Panc1 (cell line): ENCODE measurements at regions of chr18 and their contacts with region 1.

Region 1: DNA sequence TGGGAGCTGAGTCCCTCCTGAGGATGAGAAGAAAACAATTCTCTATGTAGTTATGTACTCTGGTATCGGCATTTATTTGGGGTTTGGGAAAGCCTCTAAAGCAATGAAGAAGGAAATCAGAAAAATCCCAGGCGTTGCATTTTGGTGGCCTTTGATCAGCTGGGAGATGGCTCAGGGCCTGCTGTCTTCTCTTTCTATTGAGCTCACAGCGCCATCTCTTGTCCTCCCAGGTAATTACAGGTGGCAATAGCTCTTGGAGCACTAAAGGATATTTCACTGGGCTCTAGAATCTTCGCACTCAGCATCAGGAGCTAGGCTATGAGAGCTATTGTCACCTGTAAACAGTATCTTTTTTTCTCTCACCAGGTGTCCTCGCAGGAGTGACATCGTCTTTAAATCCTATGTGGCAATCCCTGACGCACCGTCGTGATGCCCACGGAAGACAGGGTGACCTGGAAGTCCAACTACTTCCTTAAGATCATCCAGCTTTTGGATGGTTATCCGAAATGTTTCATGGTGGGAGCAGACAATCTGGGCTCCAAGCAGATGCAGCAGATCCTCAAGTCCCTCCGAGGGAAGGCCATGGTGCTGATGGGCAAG is 76.1 kb upstream of the PMAIP1 start:
- DNase-seq: peak; percentile 38
- ATAC-seq: peak; percentile 71; the same call in 1 of the 2 replicates
- H3K4me3 ChIP-seq: no peak overlapping the region
- H3K27ac ChIP-seq: no peak overlapping the region
- H3K4me1 ChIP-seq: no peaks in the 10 kb centered on the region
- H3K27me3 ChIP-seq: no peaks in the 10 kb centered on the region
- CTCF ChIP-seq: peak; percentile 73

Region 2: GRCh38 chr18:59459369-59460079 is 364.2 kb before region 1 on chr18:
- CTCF ChIA-PET with region 1: interaction called, 26 read pairs
- POLR2A ChIA-PET with region 1: no interaction called
- in situ Hi-C with region 1: no loop called
- intact Hi-C with region 1: loop called (anchors 2 kb)
- DNase-seq: no peak
- ATAC-seq: no peak
- H3K4me3 ChIP-seq: no peak overlapping the region
- H3K27ac ChIP-seq: no peak overlapping the region
- H3K4me1 ChIP-seq: no peaks in the 10 kb centered on the region
- H3K27me3 ChIP-seq: no peaks in the 10 kb centered on the region
- CTCF ChIP-seq: peak; percentile 47; the same call in 1 of the 2 replicates

Region 3: GRCh38 chr18:59631583-59632181 is 192.0 kb before region 1 on chr18:
- CTCF ChIA-PET with region 1: interaction called, 10 read pairs
- POLR2A ChIA-PET with region 1: no interaction called
- in situ Hi-C with region 1: no loop called
- intact Hi-C with region 1: loop called (anchors 5 kb)
- DNase-seq: peak; percentile 12
- ATAC-seq: no peak
- H3K4me3 ChIP-seq: no peak overlapping the region
- H3K27ac ChIP-seq: no peak overlapping the region
- H3K4me1 ChIP-seq: no peaks in the 10 kb centered on the region
- H3K27me3 ChIP-seq: no peaks in the 10 kb centered on the region
- CTCF ChIP-seq: peak; percentile 59

Region 4: DNA sequence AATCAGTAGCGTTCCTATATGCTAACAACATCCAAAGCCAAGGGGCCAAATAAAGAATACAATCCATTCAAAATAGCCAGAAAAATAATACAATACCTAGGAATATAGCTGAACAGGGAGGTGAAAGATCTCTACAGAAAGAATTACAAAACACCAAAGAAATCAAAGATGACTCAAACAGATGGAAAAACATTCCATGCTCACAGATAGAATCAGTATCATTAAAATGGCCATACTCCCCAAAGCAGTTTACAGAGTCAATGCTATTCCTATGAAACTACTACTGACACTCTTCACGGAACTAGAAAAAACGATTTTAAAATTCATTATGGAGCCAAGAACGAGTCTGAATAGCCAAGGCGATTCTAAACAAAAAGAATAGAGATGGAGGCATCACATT is 183.9 kb before region 1 on chr18:
- CTCF ChIA-PET with region 1: no interaction called
- POLR2A ChIA-PET with region 1: no interaction called
- in situ Hi-C with region 1: no loop called
- intact Hi-C with region 1: loop called (anchors 5 kb)
- DNase-seq: no peak
- ATAC-seq: no peak
- H3K4me3 ChIP-seq: no peak overlapping the region
- H3K27ac ChIP-seq: no peak overlapping the region
- H3K4me1 ChIP-seq: no peaks in the 10 kb centered on the region
- H3K27me3 ChIP-seq: no peaks in the 10 kb centered on the region
- CTCF ChIP-seq: no peak

Region 5: GRCh38 chr18:59783138-59783537 is 40.6 kb before region 1 on chr18:
- CTCF ChIA-PET with region 1: interaction called, 4 read pairs
- POLR2A ChIA-PET with region 1: no interaction called
- in situ Hi-C with region 1: no loop called
- intact Hi-C with region 1: loop called (anchors 5 kb)
- DNase-seq: peak; percentile 47
- ATAC-seq: peak; percentile 78
- H3K4me3 ChIP-seq: no peak overlapping the region
- H3K27ac ChIP-seq: no peak overlapping the region
- H3K4me1 ChIP-seq: no peaks in the 10 kb centered on the region
- H3K27me3 ChIP-seq: no peaks in the 10 kb centered on the region
- CTCF ChIP-seq: peak; percentile 63

Region 6: DNA sequence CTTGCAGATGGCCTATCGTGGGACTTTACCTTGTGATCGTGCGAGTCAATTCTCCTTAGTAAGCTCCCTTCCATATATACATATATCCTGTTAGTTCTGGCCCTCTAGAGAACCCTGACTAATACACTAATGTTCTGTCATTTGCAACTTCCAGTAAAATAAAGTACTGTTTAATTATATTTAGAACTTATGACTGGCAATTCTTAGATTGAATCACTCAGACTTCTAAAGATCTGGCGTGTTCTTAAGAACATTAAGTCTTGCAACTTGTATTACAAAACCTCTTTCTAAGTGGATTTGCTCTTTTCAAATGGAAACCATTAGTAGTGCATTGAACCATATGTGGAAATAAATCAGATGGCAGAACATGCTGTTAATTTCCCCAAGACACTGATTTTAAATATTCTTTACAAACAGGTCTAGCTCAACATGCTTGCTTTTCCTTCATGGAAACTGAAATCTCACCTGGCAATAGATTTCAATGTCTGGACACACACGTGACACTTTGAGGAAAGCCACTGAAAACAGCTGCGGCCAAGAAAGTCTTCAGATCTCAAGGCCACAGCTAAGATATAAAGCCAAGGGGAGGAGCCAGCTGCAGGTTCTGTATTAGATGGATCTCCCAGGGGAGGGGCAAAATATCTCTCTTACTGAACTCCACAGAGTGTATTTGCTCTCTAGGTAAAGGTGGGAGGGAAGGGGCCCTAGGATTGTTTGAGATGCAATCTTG is 126.7 kb after region 1 on chr18:
- CTCF ChIA-PET with region 1: no interaction called
- POLR2A ChIA-PET with region 1: no interaction called
- in situ Hi-C with region 1: no loop called
- intact Hi-C with region 1: no loop called
- DNase-seq: no peak
- ATAC-seq: no peak
- H3K4me3 ChIP-seq: no peak overlapping the region
- H3K27ac ChIP-seq: no peak overlapping the region
- H3K4me1 ChIP-seq: no peaks in the 10 kb centered on the region
- H3K27me3 ChIP-seq: no peaks in the 10 kb centered on the region
- CTCF ChIP-seq: no peak

Region 7: GRCh38 chr18:61435064-61435652 is 1611.5 kb after region 1 on chr18:
- CTCF ChIA-PET with region 1: no interaction called
- POLR2A ChIA-PET with region 1: no interaction called
- in situ Hi-C with region 1: no loop called
- intact Hi-C with region 1: no loop called
- DNase-seq: no peak
- ATAC-seq: no peak
- H3K4me3 ChIP-seq: no peak overlapping the region
- H3K27ac ChIP-seq: no peak overlapping the region
- H3K4me1 ChIP-seq: no peaks in the 10 kb centered on the region
- H3K27me3 ChIP-seq: no peaks in the 10 kb centered on the region
- CTCF ChIP-seq: peak; percentile 20; the same call in 1 of the 2 replicates